Heart left ventricle (tissue), 16 donors: ENCODE measurements at regions of chr6 and their contacts with region 1.

Region 1: DNA sequence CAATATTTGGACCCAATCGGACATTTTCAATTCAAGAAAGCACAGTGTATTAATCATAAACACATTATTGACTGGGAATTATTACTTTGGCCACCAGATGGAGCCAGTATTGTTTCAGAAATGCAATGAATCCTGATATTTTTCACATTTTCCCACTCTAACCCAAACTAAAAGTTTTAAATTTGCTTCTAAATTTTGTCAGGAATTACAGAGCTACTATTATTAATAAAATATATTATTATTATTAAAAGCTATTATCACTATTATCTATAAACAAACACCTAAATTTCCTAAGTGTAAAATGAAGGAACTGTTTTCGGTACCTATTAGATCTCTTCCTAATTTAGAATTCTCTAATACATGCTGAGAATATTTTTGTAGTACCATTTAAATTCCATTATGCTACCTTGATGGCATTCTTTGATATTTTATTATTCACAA is 245.3 kb downstream of the OGFRL1 start:
- DNase-seq: no peak
- ATAC-seq: no peak
- H3K4me3 ChIP-seq: no peak overlapping the region
- H3K27ac ChIP-seq: no peak overlapping the region
- H3K4me1 ChIP-seq: peaks cover 0 to 3% (median 0%) of the 10 kb centered on the region in 12 donors
- H3K27me3 ChIP-seq: no peaks in the 10 kb centered on the region
- CTCF ChIP-seq: peak; percentile 52 to 80 (median 63)
- POLR2A ChIP-seq: no peak

Region 2: DNA sequence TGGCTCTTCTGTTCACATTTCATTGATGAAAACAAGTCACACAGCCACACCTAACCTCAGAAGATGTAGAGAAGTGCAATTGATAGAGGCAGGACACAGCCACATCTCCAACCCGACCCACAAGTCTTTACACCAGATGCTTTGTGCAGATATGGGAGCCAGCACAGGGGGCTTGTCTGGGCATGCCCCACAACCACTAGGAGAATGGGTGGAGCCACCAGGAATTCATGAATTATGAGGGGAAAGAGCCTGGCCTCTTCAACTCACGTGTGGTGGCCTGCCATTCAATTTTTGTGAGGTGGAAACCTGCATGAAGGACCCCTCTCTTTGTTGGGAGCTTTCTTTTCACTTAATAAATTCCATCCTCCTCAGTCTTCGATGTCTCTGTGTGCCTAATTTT is 166.2 kb before region 1 on chr6:
- intact Hi-C with region 1: no loop called
- DNase-seq: no peak
- ATAC-seq: no peak
- H3K4me3 ChIP-seq: no peak overlapping the region
- H3K27ac ChIP-seq: no peak overlapping the region
- H3K4me1 ChIP-seq: peaks cover 0 to 43% (median 23%) of the 10 kb centered on the region in 12 donors
- H3K27me3 ChIP-seq: no peaks in the 10 kb centered on the region
- CTCF ChIP-seq: no peak
- POLR2A ChIP-seq: no peak

Region 3: GRCh38 chr6:72078096-72078495 is 544.1 kb after region 1 on chr6:
- intact Hi-C with region 1: loop called in 5 of 10 experiments (anchors 5 kb)
- DNase-seq: no peak
- ATAC-seq: no peak
- H3K4me3 ChIP-seq: no peak overlapping the region
- H3K27ac ChIP-seq: no peak overlapping the region
- H3K4me1 ChIP-seq: no peaks in the 10 kb centered on the region
- H3K27me3 ChIP-seq: peaks cover 0 to 10% (median 0%) of the 10 kb centered on the region in 9 donors
- CTCF ChIP-seq: no peak
- POLR2A ChIP-seq: no peak

Region 4: GRCh38 chr6:72084992-72085569 is 551.1 kb after region 1 on chr6:
- intact Hi-C with region 1: loop called in 9 of 10 experiments (anchors 2 to 5 kb)
- DNase-seq: no peak
- ATAC-seq: no peak
- H3K4me3 ChIP-seq: no peak overlapping the region
- H3K27ac ChIP-seq: no peak overlapping the region
- H3K4me1 ChIP-seq: no peaks in the 10 kb centered on the region
- H3K27me3 ChIP-seq: peaks cover 0 to 9% (median 0%) of the 10 kb centered on the region in 9 donors
- CTCF ChIP-seq: peak; percentile 25 to 66 (median 50)
- POLR2A ChIP-seq: no peak